Transverse colon (tissue), 4 donors: ENCODE measurements at regions of chr22 and their contacts with region 1.

Region 1: DNA sequence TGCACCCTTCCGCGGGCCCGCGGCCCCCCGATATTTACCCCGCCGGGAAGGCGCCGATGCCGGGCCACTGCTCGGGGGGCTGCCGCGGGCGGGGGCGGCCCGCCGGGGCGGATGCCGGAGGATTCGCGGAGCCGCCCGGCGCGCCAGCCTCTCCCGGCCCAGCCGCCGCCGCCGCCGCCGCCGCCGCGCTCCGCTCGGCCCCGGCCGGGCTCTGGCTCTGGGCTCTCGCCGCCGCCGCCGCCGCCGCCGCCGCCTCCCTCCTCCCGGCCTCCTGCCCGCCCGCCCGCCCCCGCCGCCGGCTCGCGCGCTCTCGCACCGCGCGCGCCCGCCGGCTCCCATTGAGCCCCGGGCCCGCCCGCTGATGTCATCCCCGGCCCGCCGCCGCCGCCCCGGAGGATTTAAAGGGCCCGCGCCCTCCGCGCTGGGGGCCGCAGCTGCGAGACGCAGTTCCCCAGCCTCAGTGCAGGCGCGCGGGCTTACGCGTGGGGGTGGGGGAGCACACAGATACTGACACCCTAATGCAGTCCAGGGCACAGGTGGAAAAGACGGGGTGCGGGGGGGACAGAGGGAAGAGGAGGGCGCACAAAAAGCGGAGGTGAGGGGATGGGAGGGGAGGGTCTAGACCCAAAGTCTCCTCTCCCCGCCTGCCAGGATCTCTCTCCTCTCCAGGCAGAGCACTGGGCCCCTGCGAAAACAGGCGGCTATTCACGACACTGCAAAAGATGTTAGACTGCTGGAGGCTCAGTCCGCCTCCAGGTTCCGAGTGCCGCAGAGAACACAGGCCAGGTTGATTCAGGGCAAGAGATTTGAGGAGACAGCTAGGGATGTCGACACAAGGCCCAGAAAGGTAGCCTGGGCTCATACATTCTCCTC is at the start of gene CSNK1E:
- DNase-seq: peak; percentile 86
- H3K4me3 ChIP-seq: peak within 1 kb of the TSS; percentile 64 to 92 (median 78)
- H3K27ac ChIP-seq: peak within 1 kb of the TSS; percentile 96 to 99 (median 99)
- H3K4me1 ChIP-seq: peaks cover 34 to 55% (median 47%) of the 10 kb centered on the region in 4 donors
- H3K27me3 ChIP-seq: no peaks in the 10 kb centered on the region
- CTCF ChIP-seq: no peak
- EP300 ChIP-seq: no peak
- POLR2A ChIP-seq: no peak
- total RNA-seq, gene CSNK1E: 47.9 to 179 (median 106) TPM

Region 2: DNA sequence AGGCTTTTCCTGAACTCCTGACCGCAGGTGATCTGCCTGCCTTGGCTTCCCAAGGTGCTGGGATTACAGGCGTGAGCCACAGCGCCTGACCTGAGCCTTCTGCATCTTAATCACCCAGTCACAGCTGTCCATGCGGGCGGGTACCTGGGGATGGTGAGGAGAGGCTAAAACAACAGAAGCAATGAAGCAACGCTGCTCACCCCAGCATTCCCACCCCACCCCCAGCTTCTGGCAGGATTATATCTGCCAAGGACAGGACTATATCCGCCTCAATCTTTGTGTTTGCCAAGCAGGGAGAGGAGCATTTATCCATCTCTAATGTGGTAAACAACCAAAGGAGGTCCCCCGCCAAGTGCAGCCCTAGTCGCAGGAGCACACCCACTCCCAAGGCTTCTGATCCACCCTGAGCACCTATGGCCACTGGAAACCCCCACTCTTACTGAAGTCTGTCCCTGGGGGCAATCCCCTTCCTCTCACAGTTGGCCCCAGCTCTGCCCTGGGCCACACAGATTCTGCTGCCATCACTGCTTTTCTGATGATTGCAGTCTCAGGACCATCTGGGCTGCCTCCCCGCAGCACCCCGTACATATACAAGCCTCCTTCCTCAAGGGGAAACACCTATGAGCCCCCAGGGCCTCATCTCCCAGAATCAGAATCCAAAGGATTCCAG is 728.7 kb before region 1 on chr22:
- in situ Hi-C with region 1: no loop called
- intact Hi-C with region 1: no loop called
- DNase-seq: peak; percentile 76
- H3K4me3 ChIP-seq: no peak overlapping the region
- H3K27ac ChIP-seq: peak overlapping the region; percentile 37 to 75 (median 64)
- H3K4me1 ChIP-seq: peaks cover 0 to 25% (median 16%) of the 10 kb centered on the region in 4 donors
- H3K27me3 ChIP-seq: no peaks in the 10 kb centered on the region
- CTCF ChIP-seq: no peak
- EP300 ChIP-seq: no peak
- POLR2A ChIP-seq: no peak

Region 3: DNA sequence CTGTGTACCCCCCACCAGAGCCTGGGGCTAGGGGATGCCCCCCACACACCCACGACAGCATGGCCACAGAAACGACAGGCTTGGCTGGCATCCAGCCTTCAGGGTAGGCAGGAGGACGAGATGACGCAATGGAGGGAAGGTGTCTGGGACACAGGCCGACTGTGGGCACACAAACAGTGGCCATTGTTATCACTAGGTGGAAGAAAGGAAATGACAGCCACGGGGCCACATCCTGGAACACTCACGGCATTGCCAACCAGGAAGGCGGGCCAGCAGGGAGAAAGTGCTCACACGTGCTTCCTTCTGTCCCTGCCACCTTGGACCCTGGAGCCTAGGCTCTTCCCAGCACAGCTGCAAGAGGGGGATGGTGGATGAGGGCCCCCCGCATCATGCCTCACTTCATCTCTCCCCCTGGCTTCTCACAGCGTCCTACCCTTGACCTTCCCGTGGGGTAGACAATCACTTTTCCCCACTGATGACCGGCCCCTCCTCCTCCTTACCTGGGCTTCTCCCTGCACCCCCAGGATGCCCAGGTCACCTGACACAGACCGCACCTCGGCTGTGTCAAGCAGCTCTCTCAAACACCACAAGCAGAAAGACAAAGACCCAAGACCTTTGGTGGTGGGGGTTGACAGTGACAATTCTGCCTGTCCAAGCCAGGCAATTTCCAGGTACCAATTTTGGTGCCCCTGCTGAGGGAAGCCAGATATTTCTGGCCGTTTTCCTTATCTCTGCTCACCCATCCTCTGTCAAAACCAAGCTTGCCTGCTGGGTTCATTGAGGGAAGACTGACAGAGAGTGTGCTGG is 144.3 kb before region 1 on chr22:
- in situ Hi-C with region 1: no loop called
- intact Hi-C with region 1: no loop called
- DNase-seq: peak; percentile 53
- H3K4me3 ChIP-seq: no peak overlapping the region
- H3K27ac ChIP-seq: peak overlapping the region in 3 of 4 donors; percentile 0 to 22 (median 1)
- H3K4me1 ChIP-seq: peaks cover 6 to 26% (median 16%) of the 10 kb centered on the region in 4 donors
- H3K27me3 ChIP-seq: no peaks in the 10 kb centered on the region
- CTCF ChIP-seq: no peak
- EP300 ChIP-seq: peak; percentile 49
- POLR2A ChIP-seq: no peak

Region 4: DNA sequence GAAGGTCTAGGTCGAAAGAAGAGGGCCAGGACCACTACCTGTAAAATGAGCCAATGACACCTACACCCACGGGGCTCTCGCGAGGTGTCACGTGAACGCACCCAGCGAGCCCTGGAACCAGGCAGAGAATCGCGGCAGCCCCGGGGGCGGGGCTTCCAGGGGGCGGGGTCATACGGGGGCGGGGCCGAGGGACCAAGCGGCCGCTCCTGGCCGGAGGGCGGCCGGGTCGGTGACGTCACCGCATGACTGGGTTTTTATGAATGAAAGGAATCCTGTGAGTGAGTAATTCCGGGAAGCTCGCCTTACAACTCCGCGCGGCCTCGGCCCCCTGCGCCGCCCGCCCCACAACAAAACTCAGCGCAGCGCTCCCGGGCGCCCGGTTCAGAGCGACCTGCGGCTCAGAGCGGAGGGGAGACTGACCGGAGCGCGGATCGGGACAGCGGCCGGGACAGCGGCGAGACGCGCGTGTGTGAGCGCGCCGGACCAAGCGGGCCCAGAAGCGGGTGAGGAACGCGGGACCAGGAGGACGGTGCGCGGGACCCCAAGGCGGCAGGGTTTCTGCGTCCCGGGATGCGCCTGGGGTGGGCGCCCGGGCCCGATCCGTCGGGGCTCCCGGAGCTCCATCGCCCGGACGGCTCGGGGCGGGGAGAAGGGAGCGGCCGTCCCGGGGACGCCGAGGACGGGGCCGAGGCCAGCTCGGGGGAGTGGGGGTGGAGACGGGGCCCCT is 115.5 kb before region 1 on chr22 and contains the start of gene MAFF:
- in situ Hi-C with region 1: no loop called
- intact Hi-C with region 1: loop called (anchors 2 kb)
- DNase-seq: peak; percentile 98
- H3K4me3 ChIP-seq: peak within 1 kb of the TSS; percentile 45 to 98 (median 86)
- H3K27ac ChIP-seq: peak within 1 kb of the TSS; percentile 96 to 100 (median 99)
- H3K4me1 ChIP-seq: peaks cover 10 to 39% (median 27%) of the 10 kb centered on the region in 4 donors
- H3K27me3 ChIP-seq: no peaks in the 10 kb centered on the region
- CTCF ChIP-seq: no peak
- EP300 ChIP-seq: peak; percentile 13
- POLR2A ChIP-seq: peak; percentile 98
- total RNA-seq, gene MAFF: 3.8 to 30.3 (median 22.0) TPM

Region 5: GRCh38 chr22:38262051-38262795 is 55.1 kb before region 1 on chr22:
- in situ Hi-C with region 1: no loop called
- intact Hi-C with region 1: loop called (anchors 5 kb)
- DNase-seq: peak; percentile 78
- H3K4me3 ChIP-seq: no peak overlapping the region
- H3K27ac ChIP-seq: peak overlapping the region; percentile 80 to 88 (median 88)
- H3K4me1 ChIP-seq: peaks cover 32 to 69% (median 61%) of the 10 kb centered on the region in 4 donors
- H3K27me3 ChIP-seq: no peaks in the 10 kb centered on the region
- CTCF ChIP-seq: peak; percentile 59 to 66 (median 63)
- EP300 ChIP-seq: no peak
- POLR2A ChIP-seq: no peak

Region 6: GRCh38 chr22:38272373-38273134 is 44.8 kb before region 1 on chr22 and contains the start of gene TMEM184B:
- in situ Hi-C with region 1: no loop called
- intact Hi-C with region 1: no loop called
- DNase-seq: peak; percentile 83
- H3K4me3 ChIP-seq: peak within 1 kb of the TSS; percentile 81 to 96 (median 89)
- H3K27ac ChIP-seq: peak within 1 kb of the TSS; percentile 90 to 97 (median 92)
- H3K4me1 ChIP-seq: peaks cover 18 to 41% (median 28%) of the 10 kb centered on the region in 4 donors
- H3K27me3 ChIP-seq: no peaks in the 10 kb centered on the region
- CTCF ChIP-seq: no peak
- EP300 ChIP-seq: no peak
- POLR2A ChIP-seq: peak; percentile 51
- total RNA-seq, gene TMEM184B: 18.7 to 88.4 (median 41.1) TPM

Region 7: DNA sequence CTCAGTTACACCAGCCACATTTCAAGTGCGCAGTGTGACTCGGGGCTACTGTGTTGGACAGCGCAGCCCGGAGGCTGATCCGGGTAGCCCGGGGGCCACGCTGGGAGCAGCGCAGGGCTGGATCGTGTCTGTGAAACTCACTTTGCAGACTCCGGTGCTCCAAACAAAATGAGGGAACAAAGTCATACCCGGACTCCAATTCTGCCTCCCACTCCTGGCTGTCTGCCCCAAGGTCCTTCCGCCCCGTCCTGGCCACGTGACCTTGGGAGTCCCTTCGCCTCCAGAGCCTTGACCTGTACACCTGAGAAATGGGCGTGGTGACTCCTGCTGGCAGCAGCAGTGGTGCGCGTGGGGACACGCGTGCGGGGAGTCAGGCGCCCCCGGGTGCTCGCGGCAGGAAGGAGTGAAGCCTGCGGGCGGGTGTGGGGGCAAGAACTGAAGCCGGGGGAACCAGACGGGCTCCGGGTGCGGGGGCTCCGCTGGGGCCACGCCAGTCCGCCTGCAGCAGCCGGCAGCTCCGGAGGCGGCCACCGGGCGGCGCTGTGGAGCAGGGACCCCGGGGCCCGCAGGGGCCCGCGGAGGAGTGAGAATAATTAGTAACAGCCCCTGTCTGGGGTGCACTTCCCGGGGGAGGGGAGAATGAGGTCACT is 95.2 kb after region 1 on chr22:
- in situ Hi-C with region 1: loop called in 1 of 4 experiments (anchors 25 kb)
- intact Hi-C with region 1: no loop called
- DNase-seq: no peak
- H3K4me3 ChIP-seq: peak overlapping the region in 3 of 4 donors; percentile 2 to 32 (median 23)
- H3K27ac ChIP-seq: no peak overlapping the region
- H3K4me1 ChIP-seq: peaks cover 8 to 11% (median 10%) of the 10 kb centered on the region in 4 donors
- H3K27me3 ChIP-seq: no peaks in the 10 kb centered on the region
- CTCF ChIP-seq: peak; percentile 63 to 88 (median 78)
- EP300 ChIP-seq: no peak
- POLR2A ChIP-seq: no peak